Natural killer cell (primary cell): ENCODE measurements at regions of chr21 and their contacts with region 1.

Region 1: DNA sequence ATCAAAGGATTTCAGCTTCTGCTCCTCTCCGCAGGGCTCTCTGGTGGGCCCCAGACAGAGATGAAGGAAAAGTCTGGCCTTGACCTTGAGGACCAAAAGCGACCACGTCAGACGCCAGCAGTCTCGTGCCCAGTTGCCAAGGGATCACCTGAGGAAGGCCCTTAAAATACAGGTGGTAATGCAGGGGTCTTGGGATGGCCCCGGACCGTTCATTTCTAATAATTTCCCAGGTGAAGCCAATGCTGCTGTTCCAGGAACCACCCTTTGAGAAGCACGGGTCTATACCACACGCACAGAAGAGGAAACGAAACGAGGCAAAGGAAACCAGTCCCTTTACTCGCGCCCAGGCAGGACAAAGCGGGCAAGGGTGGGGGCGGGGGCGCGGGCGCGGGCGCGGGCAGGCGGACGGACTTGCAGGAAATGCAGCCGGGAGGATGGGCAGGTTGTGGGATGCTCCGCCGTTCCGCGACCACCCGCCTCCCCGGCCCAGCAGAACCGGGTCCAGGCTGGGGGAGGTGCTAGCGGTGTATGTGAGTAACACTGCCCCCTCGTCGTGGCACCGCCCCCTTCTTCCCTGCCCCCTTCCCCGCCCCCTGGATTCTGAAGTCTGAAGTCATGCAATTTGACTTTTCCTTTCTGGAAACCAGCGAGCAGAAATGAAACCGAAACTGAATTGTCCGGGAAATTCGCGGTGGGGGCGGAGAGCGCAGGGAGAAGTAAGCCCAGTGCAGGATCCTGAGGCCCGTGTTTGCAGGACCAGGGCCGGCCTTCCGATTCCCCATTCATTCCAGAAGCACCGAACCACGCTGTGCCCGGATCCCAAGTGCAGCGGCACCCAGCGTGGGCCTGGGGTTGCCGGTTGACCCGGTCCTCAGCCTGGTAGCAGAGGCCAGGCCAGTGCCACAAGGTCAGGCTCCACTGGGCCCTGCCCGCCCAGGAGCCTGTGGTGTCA is 5.9 kb upstream of the MX1 start:
- DNase-seq: peak in 1 of 2 donors; percentile 60
- ATAC-seq: peak; percentile 75 to 81 (median 78)
- H3K4me3 ChIP-seq: peak overlapping the region; percentile 68
- H3K4me3 Mint-ChIP-seq: peak overlapping the region; percentile 93
- H3K27ac ChIP-seq: peak overlapping the region; percentile 37
- H3K27ac Mint-ChIP-seq: peak overlapping the region; percentile 71 to 89
- H3K4me1 ChIP-seq: peaks cover 12% of the 10 kb centered on the region
- H3K4me1 Mint-ChIP-seq: peaks cover 6 to 22% of the 10 kb centered on the region in 2 donors
- H3K27me3 ChIP-seq: no peaks in the 10 kb centered on the region
- H3K27me3 Mint-ChIP-seq: no peaks in the 10 kb centered on the region
- CTCF ChIP-seq: no peak

Region 2: DNA sequence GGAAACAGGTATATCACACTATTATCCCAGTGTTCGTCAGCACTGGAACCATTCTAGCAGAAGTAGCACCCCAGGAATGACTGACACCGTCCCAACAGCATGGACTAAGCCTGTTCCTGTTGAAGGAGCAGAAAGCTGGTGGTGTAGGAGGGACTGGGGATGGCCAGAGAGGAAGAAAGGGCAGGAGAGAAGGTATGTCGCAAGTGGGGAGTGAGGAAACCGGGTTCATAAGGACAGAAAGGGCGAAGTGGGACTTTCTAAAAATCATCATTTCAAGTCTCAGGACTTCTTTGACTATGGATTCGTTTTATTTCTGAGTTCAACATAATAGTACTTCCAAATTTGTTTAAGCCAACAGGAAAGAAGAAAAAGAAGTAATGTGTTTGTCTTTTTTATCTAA is 13.8 kb before region 1 on chr21:
- intact Hi-C with region 1: no loop called
- DNase-seq: no peak
- ATAC-seq: no peak
- H3K4me3 ChIP-seq: no peak overlapping the region
- H3K4me3 Mint-ChIP-seq: no peak overlapping the region
- H3K27ac ChIP-seq: no peak overlapping the region
- H3K27ac Mint-ChIP-seq: no peak overlapping the region
- H3K4me1 ChIP-seq: no peaks in the 10 kb centered on the region
- H3K4me1 Mint-ChIP-seq: no peaks in the 10 kb centered on the region
- H3K27me3 ChIP-seq: no peaks in the 10 kb centered on the region
- H3K27me3 Mint-ChIP-seq: peaks cover 0 to 2% of the 10 kb centered on the region in 2 donors
- CTCF ChIP-seq: no peak

Region 3: GRCh38 chr21:42609811-42610210 is 1189.6 kb after region 1 on chr21:
- intact Hi-C with region 1: loop called (anchors 10 kb)
- DNase-seq: peak in 1 of 2 donors; percentile 78
- ATAC-seq: peak; percentile 54 to 76 (median 60)
- H3K4me3 ChIP-seq: no peak overlapping the region
- H3K4me3 Mint-ChIP-seq: no peak overlapping the region
- H3K27ac ChIP-seq: no peak overlapping the region
- H3K27ac Mint-ChIP-seq: no peak overlapping the region
- H3K4me1 ChIP-seq: peaks cover 11% of the 10 kb centered on the region
- H3K4me1 Mint-ChIP-seq: peaks cover 0 to 4% of the 10 kb centered on the region in 2 donors
- H3K27me3 ChIP-seq: no peaks in the 10 kb centered on the region
- H3K27me3 Mint-ChIP-seq: peaks cover 0 to 4% of the 10 kb centered on the region in 2 donors
- CTCF ChIP-seq: no peak